ENCODE measurements at regions of chr16 and their contacts with region 1.

Region 1: GRCh38 chr16:71762186-71762585 is 37.7 kb upstream of the PHLPP2 start:
- DNase-seq: peak; percentile 57
- ATAC-seq: no peak
- H3K4me3 ChIP-seq: no peak overlapping the region
- H3K27ac ChIP-seq: no peak overlapping the region
- H3K4me1 ChIP-seq: no peaks in the 10 kb centered on the region; the same call in 1 of the 2 replicates
- H3K27me3 ChIP-seq: no peaks in the 10 kb centered on the region
- CTCF ChIP-seq: no peak
- POLR2A ChIP-seq: no peak
- RAD21 ChIP-seq: no peak

Region 2: GRCh38 chr16:71794943-71795342 is 32.8 kb after region 1 on chr16:
- CTCF ChIA-PET with region 1: no interaction called
- POLR2A ChIA-PET with region 1: no interaction called
- dilution Hi-C with region 1: no loop called
- in situ Hi-C with region 1: no loop called
- intact Hi-C with region 1: loop called (anchors 5 kb)
- DNase-seq: no peak
- ATAC-seq: no peak
- H3K4me3 ChIP-seq: no peak overlapping the region
- H3K27ac ChIP-seq: peak overlapping the region; percentile 22; the same call in 1 of the 2 replicates
- H3K4me1 ChIP-seq: peaks cover 7% of the 10 kb centered on the region
- H3K27me3 ChIP-seq: no peaks in the 10 kb centered on the region
- CTCF ChIP-seq: no peak
- POLR2A ChIP-seq: no peak
- RAD21 ChIP-seq: no peak

Region 3: DNA sequence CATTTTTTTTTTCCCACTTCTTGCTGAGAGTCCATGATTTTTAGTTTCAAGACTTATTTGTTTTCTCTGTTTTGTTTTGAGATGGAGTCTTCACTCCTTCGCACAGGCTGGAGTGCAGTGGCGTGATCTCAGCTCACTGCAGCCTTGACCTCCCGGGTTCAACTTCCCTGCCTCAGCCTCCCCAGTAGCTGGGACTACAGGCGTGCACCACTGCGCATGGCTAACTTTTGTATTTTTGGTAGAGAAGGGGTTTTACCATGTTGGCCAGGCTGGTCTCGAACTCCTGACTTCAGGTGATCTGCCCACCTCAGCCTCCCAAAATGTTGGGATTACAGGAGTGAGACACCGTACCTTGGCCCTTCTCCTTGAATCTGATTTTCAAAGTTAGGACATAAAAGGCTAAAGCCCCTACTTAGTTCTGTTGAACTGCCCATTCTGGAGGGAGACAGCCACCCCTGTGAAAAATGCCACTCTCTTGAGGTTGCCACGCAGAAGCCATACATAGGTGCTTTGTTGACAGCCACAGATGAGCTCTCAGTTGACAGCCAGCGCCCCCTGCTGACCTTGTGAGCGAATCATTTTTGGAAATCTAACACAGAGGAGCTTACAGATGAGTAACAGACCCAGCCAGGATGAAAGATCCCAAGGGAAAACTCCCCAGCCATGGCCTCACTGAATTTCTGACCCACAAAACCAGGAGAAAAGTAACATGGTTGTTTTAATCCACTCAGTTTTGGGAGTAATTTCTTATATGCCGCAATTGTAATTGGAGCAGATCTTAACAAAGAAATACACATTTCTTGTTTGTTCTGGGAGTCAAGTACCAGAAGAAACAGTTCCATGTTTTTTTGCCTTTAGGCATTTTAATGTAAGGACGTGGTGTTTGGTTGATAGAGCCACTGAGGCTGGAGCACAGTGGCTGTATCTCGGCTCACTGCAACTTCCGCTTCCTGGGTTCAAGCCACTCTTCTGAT is 199.2 kb after region 1 on chr16:
- CTCF ChIA-PET with region 1: no interaction called
- POLR2A ChIA-PET with region 1: no interaction called
- dilution Hi-C with region 1: no loop called
- in situ Hi-C with region 1: no loop called
- intact Hi-C with region 1: loop called (anchors 10 kb)
- DNase-seq: peak; percentile 83
- ATAC-seq: peak; percentile 99
- H3K4me3 ChIP-seq: no peak overlapping the region
- H3K27ac ChIP-seq: no peak overlapping the region
- H3K4me1 ChIP-seq: no peaks in the 10 kb centered on the region
- H3K27me3 ChIP-seq: no peaks in the 10 kb centered on the region; the same call in 1 of the 2 replicates
- CTCF ChIP-seq: peak; percentile 85
- POLR2A ChIP-seq: no peak
- RAD21 ChIP-seq: peak; percentile 83